CD8-positive, alpha-beta T cell (primary cell): ENCODE measurements at regions of chr2 and their contacts with region 1.

Region 1: GRCh38 chr2:231394211-231395141 is 1.0 kb upstream of the B3GNT7 start:
- DNase-seq: peak in 2 of 9 experiments; percentile 48 to 65
- ATAC-seq: no peak
- H3K4me3 ChIP-seq: peak overlapping the region in 1 of 2 experiments; percentile 42
- H3K4me3 Mint-ChIP-seq: peak overlapping the region; percentile 70
- H3K27ac ChIP-seq: peak overlapping the region in 1 of 2 experiments; percentile 92
- H3K27ac Mint-ChIP-seq: peak overlapping the region; percentile 52
- H3K4me1 ChIP-seq: peaks cover 11% of the 10 kb centered on the region
- H3K4me1 Mint-ChIP-seq: peaks cover 21% of the 10 kb centered on the region
- H3K27me3 ChIP-seq: peaks cover 2 to 3% of the 10 kb centered on the region in 2 experiments
- H3K27me3 Mint-ChIP-seq: peaks cover 35% of the 10 kb centered on the region
- CTCF ChIP-seq: no peak

Region 2: GRCh38 chr2:230589497-230590015 is 804.9 kb before region 1 on chr2:
- CTCF ChIA-PET with region 1: no interaction called
- POLR2A ChIA-PET with region 1: no interaction called
- intact Hi-C with region 1: loop called in 1 of 2 experiments (anchors 5 kb)
- DNase-seq: peak in 2 of 9 experiments; percentile 31 to 36
- ATAC-seq: peak; percentile 62
- H3K4me3 ChIP-seq: no peak overlapping the region
- H3K4me3 Mint-ChIP-seq: peak overlapping the region; percentile 12
- H3K27ac ChIP-seq: no peak overlapping the region
- H3K27ac Mint-ChIP-seq: peak overlapping the region; percentile 84
- H3K4me1 ChIP-seq: peaks cover 30% of the 10 kb centered on the region
- H3K4me1 Mint-ChIP-seq: peaks cover 43% of the 10 kb centered on the region
- H3K27me3 ChIP-seq: no peaks in the 10 kb centered on the region
- H3K27me3 Mint-ChIP-seq: no peaks in the 10 kb centered on the region
- CTCF ChIP-seq: no peak

Region 3: GRCh38 chr2:231632559-231633142 is 238.2 kb after region 1 on chr2:
- CTCF ChIA-PET with region 1: no interaction called
- POLR2A ChIA-PET with region 1: no interaction called
- intact Hi-C with region 1: no loop called
- DNase-seq: no peak
- ATAC-seq: no peak
- H3K4me3 ChIP-seq: no peak overlapping the region
- H3K4me3 Mint-ChIP-seq: no peak overlapping the region
- H3K27ac ChIP-seq: no peak overlapping the region
- H3K27ac Mint-ChIP-seq: no peak overlapping the region
- H3K4me1 ChIP-seq: no peaks in the 10 kb centered on the region
- H3K4me1 Mint-ChIP-seq: peaks cover 3% of the 10 kb centered on the region
- H3K27me3 ChIP-seq: no peaks in the 10 kb centered on the region
- H3K27me3 Mint-ChIP-seq: no peaks in the 10 kb centered on the region
- CTCF ChIP-seq: no peak